PC-9 (cell line): ENCODE measurements at regions of chr3 and their contacts with region 1.

Region 1: GRCh38 chr3:99808151-99808794 is 9.4 kb upstream of the CMSS1 start:
- DNase-seq: peak; percentile 60
- H3K4me3 ChIP-seq: no peak overlapping the region
- H3K27ac ChIP-seq: no peak overlapping the region
- H3K4me1 ChIP-seq: no peaks in the 10 kb centered on the region
- H3K27me3 ChIP-seq: no peaks in the 10 kb centered on the region
- CTCF ChIP-seq: peak; percentile 86

Region 2: DNA sequence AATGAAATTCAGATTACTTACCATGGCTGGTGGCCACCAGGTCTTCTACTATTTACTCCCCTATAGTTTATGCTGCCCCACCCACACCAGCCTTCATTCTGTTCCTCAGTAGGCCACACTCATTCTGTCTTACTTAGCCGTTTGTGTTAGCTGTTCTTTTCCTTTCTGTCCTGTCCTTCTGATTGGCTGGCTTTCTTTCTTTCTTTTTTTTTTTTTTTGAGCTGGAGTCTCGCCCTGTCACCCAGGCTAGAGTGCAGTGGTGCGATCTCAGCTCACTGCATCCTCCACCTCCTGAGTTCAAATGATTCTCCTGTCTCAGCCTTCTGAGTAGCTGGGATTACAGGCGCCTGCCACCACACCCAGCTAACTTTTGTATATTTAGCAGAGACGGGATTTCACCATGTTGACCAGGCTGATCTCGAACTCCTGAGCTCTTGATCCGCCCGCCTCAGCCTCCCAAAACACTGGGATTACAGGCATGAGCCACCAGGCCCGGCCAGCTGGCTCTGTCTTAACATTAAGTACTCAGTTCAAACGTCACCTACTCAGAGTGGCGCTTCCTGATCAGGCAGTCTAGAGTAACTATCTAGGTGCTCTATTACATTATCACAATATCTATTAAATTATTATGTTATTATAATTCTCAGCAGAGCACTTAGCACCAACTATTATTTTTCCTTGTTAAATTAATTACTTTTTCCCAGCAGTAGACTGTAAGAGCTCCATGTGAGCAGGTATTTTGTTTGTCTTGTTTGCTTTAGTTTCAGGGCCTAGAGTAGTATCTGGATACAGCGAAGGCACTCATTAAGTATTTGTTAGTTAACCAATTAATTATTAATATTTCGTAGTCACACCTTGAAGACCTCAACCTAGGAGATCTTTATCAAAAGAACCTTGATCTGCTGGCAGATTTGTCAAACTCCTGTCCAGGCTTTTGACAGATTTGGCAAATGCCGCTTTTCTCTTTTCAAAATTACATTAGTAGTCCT is 15.7 kb after region 1 on chr3:
- CTCF ChIA-PET with region 1: interaction called, 10 read pairs
- POLR2A ChIA-PET with region 1: interaction called, 3 read pairs
- intact Hi-C with region 1: no loop called
- DNase-seq: no peak
- H3K4me3 ChIP-seq: no peak overlapping the region
- H3K27ac ChIP-seq: peak overlapping the region; percentile 0; the same call in 1 of the 2 replicates
- H3K4me1 ChIP-seq: peaks cover 27% of the 10 kb centered on the region
- H3K27me3 ChIP-seq: no peaks in the 10 kb centered on the region
- CTCF ChIP-seq: no peak

Region 3: DNA sequence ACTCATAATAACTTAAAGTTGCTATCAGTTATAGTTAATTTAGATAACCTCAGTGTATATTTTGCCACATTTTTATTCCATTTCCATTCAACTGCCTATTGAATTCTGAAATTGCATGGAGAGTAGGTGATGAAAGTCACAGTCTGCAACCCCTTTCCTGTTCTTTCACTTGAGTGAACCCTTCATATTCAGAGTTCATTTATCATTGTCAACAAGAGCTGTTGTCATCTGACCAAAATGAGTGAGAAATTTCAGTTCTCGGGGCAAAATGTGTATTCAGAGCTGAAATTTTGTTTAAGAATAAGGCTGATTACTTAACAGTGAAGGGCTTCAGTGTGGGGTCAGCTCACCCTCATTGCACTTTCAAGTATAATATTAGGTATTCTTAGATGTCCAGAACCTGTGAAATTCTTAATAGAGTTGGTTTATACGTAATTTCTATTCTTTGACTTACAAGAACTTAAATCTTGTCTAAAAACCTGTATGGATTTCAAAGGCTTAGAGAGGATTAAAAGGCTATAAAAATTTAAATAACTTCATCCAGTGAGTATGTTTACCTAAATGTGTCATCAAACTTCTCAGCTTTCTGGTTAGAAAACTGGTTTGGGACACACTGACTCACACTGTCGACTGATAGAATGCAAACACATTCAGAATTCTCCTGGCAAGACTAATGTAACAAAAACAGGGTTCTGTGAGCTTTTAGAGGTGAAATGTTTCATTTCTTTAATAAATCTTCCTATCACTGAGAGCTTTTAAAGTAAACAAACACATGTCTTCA is 101.6 kb after region 1 on chr3:
- CTCF ChIA-PET with region 1: no interaction called
- POLR2A ChIA-PET with region 1: no interaction called
- intact Hi-C with region 1: no loop called
- DNase-seq: peak; percentile 46 to 100
- H3K4me3 ChIP-seq: peak overlapping the region; percentile 26; the same call in 1 of the 2 replicates
- H3K27ac ChIP-seq: peak overlapping the region; percentile 91
- H3K4me1 ChIP-seq: peaks cover 52% of the 10 kb centered on the region
- H3K27me3 ChIP-seq: no peaks in the 10 kb centered on the region
- CTCF ChIP-seq: no peak